ENCODE measurements at regions of chr1 and their contacts with region 1.

Region 1: DNA sequence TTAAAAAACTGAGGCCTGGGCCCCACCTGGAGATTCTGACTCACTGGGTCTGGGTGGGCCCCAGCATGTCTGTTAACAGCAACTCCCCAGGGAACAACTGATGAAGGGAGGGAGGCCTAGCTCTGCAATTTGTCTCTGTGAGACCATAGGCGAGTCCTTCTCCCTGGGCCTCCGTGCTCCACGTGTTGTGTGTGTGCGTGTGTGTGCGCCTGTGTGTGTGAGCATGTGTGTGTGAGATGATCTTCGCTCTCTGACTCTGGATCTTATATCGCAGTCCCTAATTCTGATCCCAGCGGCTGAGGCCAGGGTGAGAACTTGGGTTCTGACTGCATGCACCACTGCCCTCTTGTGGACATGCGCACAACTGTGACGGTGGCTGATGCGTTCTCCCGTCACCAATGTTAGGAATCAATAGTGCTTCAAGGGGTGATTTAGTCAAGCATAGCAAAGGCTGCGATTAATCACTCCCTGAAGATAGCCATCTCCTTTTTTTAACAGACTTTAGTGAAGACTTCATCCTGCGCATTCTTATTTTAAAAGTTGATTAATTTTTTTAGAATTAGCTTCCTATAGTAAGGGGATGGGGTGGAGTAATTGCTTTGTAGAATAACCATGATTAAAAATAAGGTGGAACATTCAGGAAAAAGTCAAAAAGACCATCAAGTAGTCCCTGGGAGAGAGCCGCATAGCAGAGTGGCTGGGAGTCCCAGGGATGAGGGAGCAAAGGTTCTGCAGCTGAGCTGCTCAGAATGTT is 62.4 kb upstream of the USP24 start:
- DNase-seq: peak; percentile 57
- H3K4me3 ChIP-seq: no peak overlapping the region
- H3K27ac ChIP-seq: no peak overlapping the region
- H3K27me3 ChIP-seq: no peaks in the 10 kb centered on the region
- CTCF ChIP-seq: peak; percentile 88

Region 2: GRCh38 chr1:55140546-55140983 is 137.0 kb before region 1 on chr1:
- CTCF ChIA-PET with region 1: interaction called, 84 read pairs
- POLR2A ChIA-PET with region 1: no interaction called
- DNase-seq: peak; percentile 72
- H3K4me3 ChIP-seq: no peak overlapping the region
- H3K27ac ChIP-seq: no peak overlapping the region
- H3K27me3 ChIP-seq: no peaks in the 10 kb centered on the region
- CTCF ChIP-seq: peak; percentile 96

Region 3: GRCh38 chr1:55310505-55310971 is 33.0 kb after region 1 on chr1:
- CTCF ChIA-PET with region 1: no interaction called
- POLR2A ChIA-PET with region 1: no interaction called
- DNase-seq: peak; percentile 96
- H3K4me3 ChIP-seq: no peak overlapping the region
- H3K27ac ChIP-seq: peak overlapping the region; percentile 90
- H3K27me3 ChIP-seq: no peaks in the 10 kb centered on the region
- CTCF ChIP-seq: no peak

Region 4: DNA sequence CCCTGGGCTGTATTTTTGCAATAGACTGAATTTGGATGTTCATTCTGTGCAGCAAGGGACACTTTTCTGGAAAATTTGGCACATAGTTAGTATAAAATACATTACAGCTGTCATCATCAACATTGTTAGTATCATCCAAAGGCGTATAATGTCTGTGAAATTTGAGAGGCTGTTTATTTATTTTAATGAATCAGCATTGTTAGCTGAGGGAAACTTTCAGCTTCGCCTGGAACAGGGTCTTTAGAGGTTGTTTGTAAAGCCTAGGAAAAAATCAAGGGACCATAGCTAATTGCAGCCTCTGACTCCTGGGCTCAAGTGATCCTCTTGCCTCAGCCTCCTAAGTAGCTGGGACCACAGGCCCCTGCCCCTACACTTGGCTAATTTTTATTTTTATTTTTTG is 44.4 kb after region 1 on chr1:
- CTCF ChIA-PET with region 1: interaction called, 3 read pairs
- POLR2A ChIA-PET with region 1: interaction called, 11 read pairs
- DNase-seq: no peak
- H3K4me3 ChIP-seq: no peak overlapping the region
- H3K27ac ChIP-seq: no peak overlapping the region
- H3K27me3 ChIP-seq: no peaks in the 10 kb centered on the region
- CTCF ChIP-seq: no peak

Region 5: GRCh38 chr1:55337801-55338447 is 60.4 kb after region 1 on chr1:
- CTCF ChIA-PET with region 1: interaction called, 31 read pairs
- POLR2A ChIA-PET with region 1: no interaction called
- DNase-seq: no peak
- H3K4me3 ChIP-seq: no peak overlapping the region
- H3K27ac ChIP-seq: no peak overlapping the region
- H3K27me3 ChIP-seq: no peaks in the 10 kb centered on the region
- CTCF ChIP-seq: peak; percentile 67

Region 6: GRCh38 chr1:56584910-56585528 is 1307.5 kb after region 1 on chr1:
- CTCF ChIA-PET with region 1: interaction called, 47 read pairs
- POLR2A ChIA-PET with region 1: no interaction called
- DNase-seq: peak; percentile 49
- H3K4me3 ChIP-seq: no peak overlapping the region
- H3K27ac ChIP-seq: no peak overlapping the region
- H3K27me3 ChIP-seq: no peaks in the 10 kb centered on the region
- CTCF ChIP-seq: peak; percentile 81